ENCODE measurements at regions of chr20 and their contacts with region 1.

Region 1: DNA sequence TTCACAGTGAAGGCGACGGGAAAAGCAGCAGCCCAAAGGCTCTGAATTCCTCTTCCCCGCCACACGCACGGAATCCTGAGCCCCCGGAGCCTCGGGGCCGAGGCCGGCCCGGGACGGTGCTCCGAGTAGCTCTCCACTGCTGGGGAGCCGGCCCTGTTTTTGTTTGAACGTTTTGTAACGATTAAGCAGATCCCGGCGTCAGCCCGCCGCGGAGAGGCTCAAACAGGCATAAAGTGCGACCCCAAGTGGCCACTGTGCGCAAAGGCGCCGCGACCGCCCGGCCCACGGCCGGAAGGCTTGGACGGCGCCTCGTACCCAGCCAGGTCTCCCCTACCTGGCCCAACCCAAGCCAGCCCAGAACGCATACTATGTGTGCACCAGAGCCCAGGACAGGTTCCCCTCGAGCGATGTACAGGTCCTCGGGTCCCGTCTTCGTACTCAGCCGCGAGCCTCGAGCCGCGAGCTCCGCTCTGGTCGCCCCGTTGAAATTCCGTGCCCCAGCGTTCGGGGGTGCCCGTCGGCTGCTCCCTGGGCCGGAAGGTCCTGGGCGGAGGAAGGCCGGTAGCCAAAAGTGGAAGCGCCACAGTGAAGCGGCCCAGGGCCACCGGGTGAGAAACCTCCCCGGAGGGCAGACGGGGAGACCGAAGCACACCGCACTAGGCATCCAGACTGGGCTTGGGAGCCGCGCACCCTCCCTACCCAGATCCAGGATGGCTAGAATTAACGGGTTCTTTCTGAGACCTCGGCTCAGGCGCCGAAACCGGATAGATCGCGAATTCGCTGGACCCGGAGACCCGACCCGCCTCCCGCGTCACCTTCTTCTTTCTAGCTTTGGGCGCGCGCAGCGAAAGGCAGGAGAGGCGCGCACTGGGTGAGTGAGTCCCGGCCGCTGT is 1.2 kb upstream of the MAFB start:
- DNase-seq: peak; percentile 90 to 92
- ATAC-seq: peak; percentile 56 to 85 (median 76)
- H3K4me3 ChIP-seq: peak overlapping the region; percentile 23 to 74 (median 68)
- H3K27ac ChIP-seq: peak overlapping the region; percentile 86 to 99 (median 96)
- H3K4me1 ChIP-seq: peaks cover 4 to 51% (median 33%) of the 10 kb centered on the region in 9 donors
- H3K27me3 ChIP-seq: peaks cover 18 to 99% (median 55%) of the 10 kb centered on the region in 7 donors
- CTCF ChIP-seq: peak; percentile 74 to 97 (median 95)

Region 2: GRCh38 chr20:39264506-39265172 is 1425.5 kb before region 1 on chr20:
- intact Hi-C with region 1: loop called in 2 of 10 experiments (anchors 10 kb)
- DNase-seq: peak; percentile 41 to 50
- ATAC-seq: peak; percentile 28 to 79 (median 54)
- H3K4me3 ChIP-seq: no peak overlapping the region
- H3K27ac ChIP-seq: no peak overlapping the region
- H3K4me1 ChIP-seq: peaks cover 0 to 24% (median 0%) of the 10 kb centered on the region in 9 donors
- H3K27me3 ChIP-seq: peaks cover 0 to 8% (median 0%) of the 10 kb centered on the region in 7 donors
- CTCF ChIP-seq: peak; percentile 58 to 92 (median 86)

Region 3: GRCh38 chr20:39874049-39874888 is 815.9 kb before region 1 on chr20:
- intact Hi-C with region 1: loop called in 1 of 10 experiments (anchors 10 kb)
- DNase-seq: peak; percentile 46 to 88
- ATAC-seq: peak; percentile 53 to 97 (median 95)
- H3K4me3 ChIP-seq: no peak overlapping the region
- H3K27ac ChIP-seq: no peak overlapping the region
- H3K4me1 ChIP-seq: peaks cover 0 to 8% (median 0%) of the 10 kb centered on the region in 9 donors
- H3K27me3 ChIP-seq: peaks cover 0 to 15% (median 5%) of the 10 kb centered on the region in 7 donors
- CTCF ChIP-seq: peak; percentile 62 to 89 (median 85)

Region 4: GRCh38 chr20:39892983-39893685 is 797.1 kb before region 1 on chr20:
- intact Hi-C with region 1: loop called in 8 of 10 experiments (anchors 5 to 10 kb)
- DNase-seq: no peak
- ATAC-seq: peak in 5 of 8 donors; percentile 18 to 89 (median 64)
- H3K4me3 ChIP-seq: no peak overlapping the region
- H3K27ac ChIP-seq: peak overlapping the region in 2 of 10 donors; percentile 0 to 8
- H3K4me1 ChIP-seq: peaks cover 0 to 6% (median 0%) of the 10 kb centered on the region in 9 donors
- H3K27me3 ChIP-seq: no peaks in the 10 kb centered on the region
- CTCF ChIP-seq: peak in 1 of 9 donors; percentile 10

Region 5: GRCh38 chr20:40160097-40160550 is 530.1 kb before region 1 on chr20:
- intact Hi-C with region 1: loop called in 6 of 10 experiments (anchors 5 to 10 kb)
- DNase-seq: peak; percentile 13 to 18
- ATAC-seq: peak in 7 of 8 donors; percentile 52 to 81 (median 67)
- H3K4me3 ChIP-seq: no peak overlapping the region
- H3K27ac ChIP-seq: no peak overlapping the region
- H3K4me1 ChIP-seq: no peaks in the 10 kb centered on the region
- H3K27me3 ChIP-seq: peaks cover 0 to 9% (median 0%) of the 10 kb centered on the region in 7 donors
- CTCF ChIP-seq: peak; percentile 54 to 79 (median 71)

Region 6: GRCh38 chr20:40265825-40266533 is 424.2 kb before region 1 on chr20:
- intact Hi-C with region 1: loop called in 6 of 10 experiments (anchors 2 to 10 kb)
- DNase-seq: peak in 1 of 2 donors; percentile 15
- ATAC-seq: peak in 7 of 8 donors; percentile 29 to 64 (median 51)
- H3K4me3 ChIP-seq: no peak overlapping the region
- H3K27ac ChIP-seq: no peak overlapping the region
- H3K4me1 ChIP-seq: peaks cover 0 to 10% (median 0%) of the 10 kb centered on the region in 9 donors
- H3K27me3 ChIP-seq: no peaks in the 10 kb centered on the region
- CTCF ChIP-seq: peak in 8 of 9 donors; percentile 16 to 62 (median 46)

Region 7: DNA sequence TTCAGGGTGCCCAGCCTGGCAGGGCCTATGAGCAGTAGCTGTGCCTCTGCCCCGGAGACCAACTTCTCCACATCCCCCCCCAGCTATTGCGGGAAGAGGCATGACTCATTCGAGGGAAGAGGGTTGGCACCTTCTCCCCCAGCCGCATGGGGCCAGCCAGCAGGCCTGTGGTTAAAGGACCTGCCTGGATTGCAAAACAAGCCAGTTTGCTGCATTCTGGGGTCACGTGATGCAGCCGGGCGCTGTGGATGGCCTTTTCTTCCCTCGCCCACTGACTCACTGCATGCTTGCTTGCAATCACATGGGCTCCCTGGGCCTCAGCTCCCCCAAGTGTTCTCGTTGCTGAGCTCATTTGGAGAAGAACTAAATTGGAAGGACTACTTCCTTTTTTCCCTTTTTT is 183.6 kb before region 1 on chr20:
- intact Hi-C with region 1: no loop called
- DNase-seq: peak; percentile 72 to 78
- ATAC-seq: peak; percentile 79 to 91 (median 84)
- H3K4me3 ChIP-seq: no peak overlapping the region
- H3K27ac ChIP-seq: peak overlapping the region in 2 of 10 donors; percentile 36 to 81
- H3K4me1 ChIP-seq: peaks cover 0 to 48% (median 0%) of the 10 kb centered on the region in 9 donors
- H3K27me3 ChIP-seq: peaks cover 0 to 6% (median 0%) of the 10 kb centered on the region in 7 donors
- CTCF ChIP-seq: no peak

Region 8: GRCh38 chr20:40908309-40908708 is 218.1 kb after region 1 on chr20:
- intact Hi-C with region 1: no loop called
- DNase-seq: no peak
- ATAC-seq: no peak
- H3K4me3 ChIP-seq: no peak overlapping the region
- H3K27ac ChIP-seq: no peak overlapping the region
- H3K4me1 ChIP-seq: no peaks in the 10 kb centered on the region
- H3K27me3 ChIP-seq: no peaks in the 10 kb centered on the region
- CTCF ChIP-seq: no peak

Measured in heart right ventricle (tissue), 16 donors.